Activated naive CD4-positive, alpha-beta T cell treated with anti-CD3 and anti-CD28 coated beads for 36 hours (primary cell): ENCODE measurements at regions of chr21 and their contacts with region 1.

Region 1: GRCh38 chr21:25385911-25386474 is 221.3 kb downstream of the MRPL39 start:
- DNase-seq: no peak
- H3K4me3 Mint-ChIP-seq: no peak overlapping the region
- H3K27ac Mint-ChIP-seq: no peak overlapping the region
- H3K4me1 Mint-ChIP-seq: peaks cover 7% of the 10 kb centered on the region
- H3K27me3 Mint-ChIP-seq: peaks cover 6% of the 10 kb centered on the region

Region 2: DNA sequence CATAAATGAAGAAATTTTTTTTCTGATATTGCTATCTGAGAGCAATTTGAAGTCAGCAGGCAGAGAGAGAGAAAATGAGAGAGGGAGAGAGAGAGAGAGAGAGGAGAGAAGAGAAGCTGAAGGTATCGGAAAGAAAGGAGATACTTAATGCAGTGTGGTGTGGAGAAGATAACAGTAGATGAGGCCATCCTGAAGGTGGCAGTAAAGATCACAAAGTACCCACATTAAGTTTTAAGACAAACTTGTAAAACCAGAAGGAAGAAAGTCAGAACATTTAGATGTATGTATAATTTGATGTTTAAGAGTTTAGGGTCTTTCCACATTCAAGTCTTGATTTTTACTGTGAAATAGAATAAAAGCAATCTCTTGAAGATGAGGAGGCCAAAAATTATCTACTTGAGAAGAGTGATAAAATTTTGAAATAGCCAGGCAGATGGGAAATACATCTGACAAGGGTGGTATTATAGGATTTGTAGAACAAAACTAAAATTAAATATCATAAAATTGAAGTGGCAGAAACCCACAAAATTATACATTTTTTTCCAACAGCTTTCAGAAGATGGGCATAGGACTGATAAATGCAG is 1532.1 kb before region 1 on chr21:
- CTCF ChIA-PET with region 1: interaction called, 3 read pairs
- intact Hi-C with region 1: loop called (anchors 1 kb)
- DNase-seq: peak; percentile 14
- H3K4me3 Mint-ChIP-seq: no peak overlapping the region
- H3K27ac Mint-ChIP-seq: no peak overlapping the region
- H3K4me1 Mint-ChIP-seq: peaks cover 6% of the 10 kb centered on the region
- H3K27me3 Mint-ChIP-seq: peaks cover 3% of the 10 kb centered on the region

Region 3: DNA sequence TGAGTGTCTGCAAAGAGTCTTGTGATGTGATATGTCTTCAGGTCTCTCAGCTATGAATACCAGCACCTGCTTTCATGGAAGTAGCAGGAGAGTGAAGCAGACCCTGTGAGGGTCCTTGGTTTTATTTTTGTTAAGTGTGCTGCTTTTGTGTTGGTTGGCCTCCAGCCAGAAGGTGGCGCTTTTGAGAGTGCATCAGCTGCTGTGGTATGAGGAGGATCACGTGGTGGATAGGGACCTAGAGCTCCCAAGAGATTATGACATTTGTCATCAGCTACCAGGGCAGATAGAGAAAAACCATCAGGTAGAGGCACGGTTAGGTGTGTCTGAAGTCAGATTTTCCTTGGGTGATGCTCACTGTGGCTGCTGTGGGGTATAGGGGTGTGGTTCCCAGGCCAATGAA is 1010.8 kb before region 1 on chr21:
- CTCF ChIA-PET with region 1: no interaction called
- intact Hi-C with region 1: loop called (anchors 2 kb)
- DNase-seq: peak; percentile 46
- H3K4me3 Mint-ChIP-seq: no peak overlapping the region
- H3K27ac Mint-ChIP-seq: no peak overlapping the region
- H3K4me1 Mint-ChIP-seq: no peaks in the 10 kb centered on the region
- H3K27me3 Mint-ChIP-seq: no peaks in the 10 kb centered on the region

Region 4: GRCh38 chr21:24895885-24896734 is 489.9 kb before region 1 on chr21:
- CTCF ChIA-PET with region 1: no interaction called
- intact Hi-C with region 1: loop called (anchors 2 kb)
- DNase-seq: no peak
- H3K4me3 Mint-ChIP-seq: no peak overlapping the region
- H3K27ac Mint-ChIP-seq: no peak overlapping the region
- H3K4me1 Mint-ChIP-seq: no peaks in the 10 kb centered on the region
- H3K27me3 Mint-ChIP-seq: no peaks in the 10 kb centered on the region

Region 5: GRCh38 chr21:25283720-25284119 is 102.3 kb before region 1 on chr21:
- CTCF ChIA-PET with region 1: interaction called, 29 read pairs
- intact Hi-C with region 1: loop called (anchors 1 kb)
- DNase-seq: no peak
- H3K4me3 Mint-ChIP-seq: no peak overlapping the region
- H3K27ac Mint-ChIP-seq: no peak overlapping the region
- H3K4me1 Mint-ChIP-seq: no peaks in the 10 kb centered on the region
- H3K27me3 Mint-ChIP-seq: no peaks in the 10 kb centered on the region

Region 6: DNA sequence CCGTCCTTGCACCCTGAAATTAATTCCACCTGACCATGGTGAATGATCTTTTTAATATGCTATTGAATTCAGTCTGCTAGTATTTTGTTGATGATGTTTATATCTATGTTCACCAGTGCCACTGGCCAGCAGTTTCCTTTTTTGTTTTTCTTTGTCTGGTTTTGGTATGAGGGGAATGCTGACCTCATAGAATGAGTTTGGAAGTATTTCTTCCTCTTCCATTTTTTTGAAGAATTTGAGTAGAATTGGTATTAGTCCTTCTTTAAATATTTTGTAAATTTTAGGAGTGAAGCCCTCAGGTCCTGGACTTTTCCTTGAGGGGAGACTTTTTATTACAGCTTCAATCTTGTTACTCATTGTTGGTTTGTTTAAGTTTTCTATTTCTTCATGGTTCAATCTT is 10.3 kb before region 1 on chr21:
- CTCF ChIA-PET with region 1: interaction called, 10 read pairs
- intact Hi-C with region 1: no loop called
- DNase-seq: no peak
- H3K4me3 Mint-ChIP-seq: no peak overlapping the region
- H3K27ac Mint-ChIP-seq: no peak overlapping the region
- H3K4me1 Mint-ChIP-seq: peaks cover 10% of the 10 kb centered on the region
- H3K27me3 Mint-ChIP-seq: peaks cover 6% of the 10 kb centered on the region